Gastrocnemius medialis (tissue), 4 donors: ENCODE measurements at regions of chr16 and their contacts with region 1.

Region 1: GRCh38 chr16:740764-741505 is at the start of gene CIAO3:
- DNase-seq: peak; percentile 75 to 82
- ATAC-seq: peak; percentile 95 to 96
- H3K4me3 ChIP-seq: peak within 1 kb of the TSS; percentile 64 to 99 (median 94)
- H3K27ac ChIP-seq: peak within 1 kb of the TSS; percentile 58 to 87 (median 83)
- H3K4me1 ChIP-seq: peaks cover 11% of the 10 kb centered on the region in 2 donors
- H3K27me3 ChIP-seq: peaks cover 3 to 6% (median 5%) of the 10 kb centered on the region in 3 donors
- CTCF ChIP-seq: peak; percentile 75 to 98 (median 96)
- POLR2A ChIP-seq: peak; percentile 67 to 76
- total RNA-seq, gene CIAO3: 16.1 to 48.5 (median 21.6) TPM

Region 2: DNA sequence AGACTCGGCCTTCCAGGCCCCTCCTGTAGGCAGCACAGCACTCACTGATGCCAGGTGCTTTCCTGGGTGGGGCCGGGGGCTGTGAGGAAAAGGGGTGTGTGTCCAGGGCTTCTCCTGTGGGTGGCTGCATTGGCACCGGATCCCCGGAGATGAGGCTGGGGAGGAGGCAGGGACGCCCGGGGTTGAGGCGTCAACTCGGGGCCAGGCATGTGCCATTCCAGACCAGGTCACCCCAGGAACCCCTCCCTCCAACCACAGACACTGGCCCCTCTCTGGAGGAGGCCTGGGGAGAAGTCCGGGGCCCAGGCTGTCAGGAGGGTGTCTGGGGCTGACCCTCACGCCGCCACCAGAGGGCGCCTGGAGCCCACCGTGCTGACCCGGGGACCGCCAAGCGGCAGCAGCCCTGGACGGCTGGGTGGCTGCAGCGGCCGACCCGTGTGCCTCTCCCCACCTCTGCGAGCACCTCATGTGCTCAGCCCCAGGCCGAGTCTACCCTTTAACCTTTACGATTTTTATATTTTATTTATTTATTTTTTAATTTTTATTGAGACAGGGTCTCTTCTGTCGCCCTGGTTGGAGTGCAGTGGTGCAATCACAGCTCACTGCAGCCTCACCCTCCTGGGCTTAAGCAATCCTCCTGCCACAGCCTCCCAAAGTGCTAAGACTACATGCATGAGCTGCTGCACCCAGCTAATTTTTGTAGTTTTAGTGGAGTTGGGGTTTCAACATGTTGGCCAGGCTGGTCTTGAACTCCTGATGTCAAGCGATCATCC is 29.2 kb before region 1 on chr16:
- in situ Hi-C with region 1: no loop called
- intact Hi-C with region 1: loop called (anchors 1 kb)
- DNase-seq: peak; percentile 37 to 60
- ATAC-seq: peak in 1 of 2 donors; percentile 46
- H3K4me3 ChIP-seq: no peak overlapping the region
- H3K27ac ChIP-seq: no peak overlapping the region
- H3K4me1 ChIP-seq: peaks cover 11 to 14% of the 10 kb centered on the region in 2 donors
- H3K27me3 ChIP-seq: peaks cover 43 to 45% (median 44%) of the 10 kb centered on the region in 3 donors
- CTCF ChIP-seq: peak; percentile 73 to 95 (median 94)
- POLR2A ChIP-seq: no peak

Region 3: DNA sequence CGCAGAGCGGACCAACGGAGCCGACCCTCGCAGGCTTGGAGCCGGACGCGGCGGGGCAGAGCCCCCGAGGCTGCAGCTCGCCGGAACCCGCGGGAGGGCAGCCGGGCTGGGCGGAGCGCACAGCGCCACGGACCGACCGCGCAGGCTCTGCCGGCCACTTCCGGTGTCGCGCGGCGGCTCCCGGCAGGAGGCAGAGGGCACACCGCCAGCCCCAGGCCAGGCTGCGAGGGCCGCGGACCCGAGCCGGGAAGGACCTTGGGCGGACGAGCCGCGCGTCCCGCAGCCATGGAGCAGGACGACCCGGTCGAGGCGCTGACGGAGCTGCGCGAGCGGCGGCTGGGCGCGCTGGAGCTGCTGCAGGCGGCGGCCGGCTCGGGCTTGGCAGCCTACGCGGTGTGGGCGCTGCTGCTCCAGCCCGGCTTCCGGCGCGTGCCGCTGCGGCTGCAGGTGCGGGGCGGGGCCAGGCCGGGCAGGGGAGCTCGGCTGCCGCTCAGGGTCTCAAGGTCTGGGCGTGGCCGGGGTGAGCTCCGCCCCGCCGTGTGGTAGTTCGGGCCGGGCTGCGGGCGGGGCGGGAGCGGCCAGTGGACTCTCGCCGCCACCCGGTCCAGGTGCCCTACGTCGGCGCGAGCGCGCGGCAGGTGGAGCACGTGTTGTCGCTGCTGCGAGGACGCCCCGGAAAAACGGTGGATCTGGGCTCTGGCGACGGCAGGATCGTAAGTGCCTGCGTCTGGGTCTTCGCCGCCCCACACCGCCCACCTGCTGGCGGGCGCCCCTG is 19.8 kb before region 1 on chr16 and contains the start of gene ANTKMT:
- in situ Hi-C with region 1: no loop called
- intact Hi-C with region 1: loop called (anchors 1 kb)
- DNase-seq: peak; percentile 68 to 83
- ATAC-seq: peak; percentile 90
- H3K4me3 ChIP-seq: peak within 1 kb of the TSS; percentile 76 to 99 (median 83)
- H3K27ac ChIP-seq: peak within 1 kb of the TSS; percentile 86 to 95 (median 90)
- H3K4me1 ChIP-seq: peaks cover 15 to 30% of the 10 kb centered on the region in 2 donors
- H3K27me3 ChIP-seq: peaks cover 6 to 14% (median 11%) of the 10 kb centered on the region in 3 donors
- CTCF ChIP-seq: peak in 2 of 5 experiments; percentile 19 to 34
- POLR2A ChIP-seq: peak; percentile 70 to 71
- total RNA-seq, gene ANTKMT: 20.9 to 84.0 (median 38.7) TPM

Region 4: DNA sequence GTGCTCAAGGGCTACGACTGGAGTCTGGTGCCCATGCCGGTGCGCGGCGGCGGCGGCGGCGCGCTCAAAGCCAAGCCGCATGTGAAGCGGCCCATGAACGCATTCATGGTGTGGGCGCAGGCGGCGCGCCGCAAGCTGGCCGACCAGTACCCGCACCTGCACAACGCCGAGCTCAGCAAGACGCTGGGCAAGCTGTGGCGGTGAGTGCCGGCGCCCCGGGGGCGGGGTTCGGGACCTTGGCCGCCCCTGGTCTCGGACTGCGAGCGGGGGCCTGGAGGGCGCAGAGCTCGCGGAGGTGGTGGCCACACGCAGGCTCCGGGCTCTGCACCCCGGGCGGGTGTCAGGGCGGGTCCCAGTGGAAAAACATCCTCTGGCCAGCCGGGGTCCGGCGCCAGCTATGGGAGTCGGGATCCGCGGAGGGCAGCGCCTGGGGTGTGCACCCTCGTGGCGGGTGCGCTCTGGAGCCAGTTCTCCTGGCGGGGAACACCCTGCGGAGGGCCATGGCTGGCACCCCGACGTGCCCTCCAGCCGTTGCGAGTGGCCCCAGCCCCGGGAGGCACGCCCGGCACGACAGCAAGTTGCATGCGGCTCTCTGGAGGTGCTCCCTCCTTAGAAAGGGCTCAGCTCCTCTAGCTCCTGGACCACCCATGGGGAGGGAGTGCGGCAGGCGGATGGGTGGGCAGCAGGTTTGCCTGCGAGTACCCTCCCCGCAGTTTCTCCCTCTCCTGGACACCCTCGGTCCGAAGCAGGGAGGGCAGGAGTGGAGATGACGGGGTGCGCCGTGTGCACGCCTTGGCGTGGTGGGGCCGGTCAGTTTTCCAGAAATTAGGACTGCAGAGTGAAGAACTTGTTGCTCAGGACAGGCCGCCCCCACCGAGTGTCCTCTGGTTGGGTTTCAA is 241.5 kb after region 1 on chr16:
- in situ Hi-C with region 1: no loop called
- intact Hi-C with region 1: no loop called
- DNase-seq: no peak
- ATAC-seq: no peak
- H3K4me3 ChIP-seq: peak overlapping the region; percentile 10 to 53 (median 26)
- H3K27ac ChIP-seq: no peak overlapping the region
- H3K4me1 ChIP-seq: peaks cover 0 to 7% of the 10 kb centered on the region in 2 donors
- H3K27me3 ChIP-seq: peaks cover 51 to 72% (median 66%) of the 10 kb centered on the region in 3 donors
- CTCF ChIP-seq: no peak
- POLR2A ChIP-seq: no peak

Region 5: DNA sequence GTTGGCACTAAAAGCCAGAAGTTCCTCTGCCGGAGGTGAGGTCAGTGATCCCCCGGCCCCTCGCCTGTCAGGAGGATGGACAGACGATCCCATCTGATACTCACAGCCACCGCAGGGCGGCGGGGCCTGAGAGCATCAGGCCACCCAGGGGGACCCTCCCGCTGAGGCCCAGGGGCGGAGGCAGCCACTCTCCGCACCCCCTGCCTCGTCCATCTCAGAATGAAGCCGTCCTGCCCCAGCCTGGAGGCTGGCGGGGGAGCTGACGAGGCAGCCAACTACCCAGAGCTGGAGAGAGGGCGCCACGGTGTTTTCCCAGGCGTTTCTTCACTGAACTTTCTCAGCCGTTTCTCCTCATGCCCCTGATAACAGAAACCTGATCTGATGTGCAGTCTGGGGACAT is 537.5 kb after region 1 on chr16:
- in situ Hi-C with region 1: no loop called
- intact Hi-C with region 1: no loop called
- DNase-seq: no peak
- ATAC-seq: no peak
- H3K4me3 ChIP-seq: no peak overlapping the region
- H3K27ac ChIP-seq: no peak overlapping the region
- H3K4me1 ChIP-seq: no peaks in the 10 kb centered on the region
- H3K27me3 ChIP-seq: peaks cover 12 to 32% (median 30%) of the 10 kb centered on the region in 3 donors
- CTCF ChIP-seq: no peak
- POLR2A ChIP-seq: no peak